ENCODE measurements at regions of chr17 and their contacts with region 1.

Region 1: GRCh38 chr17:71777048-71777640 is 343.7 kb upstream of the SOX9 start:
- DNase-seq: no peak
- H3K4me3 ChIP-seq: no peak overlapping the region
- H3K27ac ChIP-seq: no peak overlapping the region
- H3K4me1 ChIP-seq: no peaks in the 10 kb centered on the region
- H3K27me3 ChIP-seq: no peaks in the 10 kb centered on the region
- CTCF ChIP-seq: no peak

Region 2: GRCh38 chr17:71730871-71731270 is 46.3 kb before region 1 on chr17:
- CTCF ChIA-PET with region 1: no interaction called
- POLR2A ChIA-PET with region 1: no interaction called
- intact Hi-C with region 1: no loop called
- DNase-seq: no peak
- H3K4me3 ChIP-seq: no peak overlapping the region
- H3K27ac ChIP-seq: no peak overlapping the region
- H3K4me1 ChIP-seq: peaks cover 5% of the 10 kb centered on the region
- H3K27me3 ChIP-seq: no peaks in the 10 kb centered on the region
- CTCF ChIP-seq: no peak

Region 3: GRCh38 chr17:72365857-72366414 is 588.8 kb after region 1 on chr17:
- CTCF ChIA-PET with region 1: interaction called, 11 read pairs
- POLR2A ChIA-PET with region 1: no interaction called
- intact Hi-C with region 1: no loop called
- DNase-seq: no peak
- H3K4me3 ChIP-seq: no peak overlapping the region
- H3K27ac ChIP-seq: no peak overlapping the region
- H3K4me1 ChIP-seq: peaks cover 7% of the 10 kb centered on the region
- H3K27me3 ChIP-seq: no peaks in the 10 kb centered on the region
- CTCF ChIP-seq: no peak

Measured in A673 (cell line).